WTC11 (cell line): ENCODE measurements at regions of chr11 and their contacts with region 1.

Region 1: GRCh38 chr11:115990004-115990447 is 485.8 kb upstream of the CADM1 start:
- DNase-seq: peak; percentile 80
- ATAC-seq: peak; percentile 99
- H3K4me3 Mint-ChIP-seq: peak overlapping the region; percentile 53
- H3K27ac Mint-ChIP-seq: no peak overlapping the region
- H3K4me1 Mint-ChIP-seq: peaks cover 15% of the 10 kb centered on the region
- H3K27me3 Mint-ChIP-seq: peaks cover 3% of the 10 kb centered on the region; the same call in 1 of the 2 replicates
- CTCF ChIP-seq: peak; percentile 68

Region 2: GRCh38 chr11:115745610-115746512 is 244.2 kb before region 1 on chr11:
- CTCF ChIA-PET with region 1: no interaction called
- POLR2A ChIA-PET with region 1: no interaction called
- DNase-seq: no peak
- ATAC-seq: no peak
- H3K4me3 Mint-ChIP-seq: no peak overlapping the region
- H3K27ac Mint-ChIP-seq: no peak overlapping the region
- H3K4me1 Mint-ChIP-seq: peaks cover 43% of the 10 kb centered on the region
- H3K27me3 Mint-ChIP-seq: peaks cover 40% of the 10 kb centered on the region
- CTCF ChIP-seq: no peak

Region 3: DNA sequence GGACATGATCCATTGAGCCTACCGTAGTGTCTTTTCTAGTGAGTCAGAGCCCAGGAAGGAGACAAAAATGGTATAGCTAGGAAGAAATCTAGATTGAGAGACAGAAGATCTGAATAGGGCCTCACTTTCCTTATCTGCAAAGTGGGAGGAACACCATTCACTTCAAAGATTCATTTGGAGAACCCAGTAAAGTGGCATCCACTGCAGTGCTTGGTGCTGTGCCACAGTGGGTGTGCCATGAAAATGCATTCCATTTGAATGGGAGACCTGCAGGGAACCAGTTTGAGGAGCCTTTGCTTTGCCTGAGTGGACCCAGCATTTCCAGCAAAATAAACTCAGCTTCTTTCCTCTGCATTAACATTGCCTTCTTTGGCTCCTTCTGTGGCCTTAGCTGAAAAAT is 15.3 kb before region 1 on chr11:
- CTCF ChIA-PET with region 1: interaction called, 14 read pairs
- POLR2A ChIA-PET with region 1: no interaction called
- DNase-seq: no peak
- ATAC-seq: peak; percentile 70
- H3K4me3 Mint-ChIP-seq: peak overlapping the region; percentile 72
- H3K27ac Mint-ChIP-seq: no peak overlapping the region
- H3K4me1 Mint-ChIP-seq: peaks cover 21% of the 10 kb centered on the region
- H3K27me3 Mint-ChIP-seq: peaks cover 95% of the 10 kb centered on the region
- CTCF ChIP-seq: no peak

Region 4: GRCh38 chr11:116033931-116034553 is 44.0 kb after region 1 on chr11:
- CTCF ChIA-PET with region 1: interaction called, 13 read pairs
- POLR2A ChIA-PET with region 1: no interaction called
- DNase-seq: no peak
- ATAC-seq: peak; percentile 48; the same call in 1 of the 2 replicates
- H3K4me3 Mint-ChIP-seq: no peak overlapping the region
- H3K27ac Mint-ChIP-seq: no peak overlapping the region
- H3K4me1 Mint-ChIP-seq: peaks cover 31% of the 10 kb centered on the region
- H3K27me3 Mint-ChIP-seq: no peaks in the 10 kb centered on the region
- CTCF ChIP-seq: no peak

Region 5: DNA sequence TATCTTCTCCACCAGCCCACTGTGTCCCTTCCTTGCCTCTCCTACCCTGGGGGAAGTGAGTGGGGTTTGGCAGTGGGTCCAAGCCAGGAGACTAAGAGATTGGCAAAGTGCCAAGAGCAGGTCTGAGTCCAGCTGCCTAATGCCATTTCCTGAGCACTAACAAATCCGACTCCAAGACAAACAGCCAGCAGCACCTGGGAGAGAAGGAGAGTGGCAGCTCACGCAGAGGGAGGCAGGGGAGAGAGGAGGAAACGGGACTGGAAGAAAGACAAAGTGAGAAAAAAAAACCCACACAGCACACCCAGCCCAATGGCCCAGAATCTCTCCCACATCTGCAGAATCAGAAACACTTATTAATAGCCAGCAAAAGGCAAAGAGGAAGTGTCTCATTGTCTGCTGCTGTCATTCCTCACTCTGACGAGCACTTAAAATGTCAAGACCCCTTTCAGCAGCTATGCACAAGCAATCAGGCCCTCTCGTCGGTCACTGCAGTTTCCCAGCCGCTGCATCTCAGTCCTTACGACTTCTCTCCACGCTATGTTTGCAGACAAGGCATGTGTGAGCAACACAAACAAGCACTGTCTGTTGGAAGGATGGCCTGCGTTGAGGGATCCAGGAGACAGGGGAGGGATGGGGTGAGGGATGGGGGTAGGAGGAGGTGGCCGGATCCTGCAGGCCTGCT is 72.6 kb after region 1 on chr11:
- CTCF ChIA-PET with region 1: no interaction called
- POLR2A ChIA-PET with region 1: no interaction called
- DNase-seq: no peak
- ATAC-seq: no peak
- H3K4me3 Mint-ChIP-seq: no peak overlapping the region
- H3K27ac Mint-ChIP-seq: no peak overlapping the region
- H3K4me1 Mint-ChIP-seq: peaks cover 32% of the 10 kb centered on the region
- H3K27me3 Mint-ChIP-seq: peaks cover 58% of the 10 kb centered on the region
- CTCF ChIP-seq: no peak